ENCODE measurements at regions of chr12 and their contacts with region 1.

Region 1: GRCh38 chr12:57983146-57983857 is 41.9 kb downstream of the ATP23 start:
- DNase-seq: peak in 2 of 4 experiments; percentile 14 to 55
- ATAC-seq: peak; percentile 67; the same call in 2 of the 3 replicates
- H3K4me3 ChIP-seq: no peak overlapping the region
- H3K27ac ChIP-seq: no peak overlapping the region
- H3K4me1 ChIP-seq: no peaks in the 10 kb centered on the region
- H3K27me3 ChIP-seq: no peaks in the 10 kb centered on the region
- CTCF ChIP-seq: peak; percentile 55 to 74 (median 61); a peak in 5 of 6 replicates
- EP300 ChIP-seq: no peak
- POLR2A ChIP-seq: no peak
- RAD21 ChIP-seq: peak; percentile 79 to 87

Region 2: DNA sequence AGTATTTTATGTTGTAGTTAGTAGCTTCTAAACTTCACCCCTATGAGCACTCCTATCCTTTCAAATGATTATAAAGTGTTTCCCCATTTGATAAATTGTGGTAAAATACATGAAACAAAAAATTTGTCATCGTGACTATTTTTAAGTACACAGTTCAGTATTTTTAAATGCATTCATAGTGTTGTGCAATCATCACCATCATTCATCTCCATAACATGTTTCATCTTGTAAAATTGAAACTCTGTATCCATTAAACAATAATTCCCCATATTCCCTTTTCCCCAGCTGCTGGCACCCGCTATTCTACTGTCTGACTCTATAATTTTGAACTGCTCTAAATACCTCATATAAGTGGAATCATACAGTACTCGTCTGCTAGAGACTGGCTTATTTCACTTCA is 10.5 kb after region 1 on chr12:
- CTCF ChIA-PET with region 1: no interaction called
- POLR2A ChIA-PET with region 1: no interaction called
- in situ Hi-C with region 1: no loop called
- intact Hi-C with region 1: no loop called
- DNase-seq: no peak
- ATAC-seq: no peak
- H3K4me3 ChIP-seq: no peak overlapping the region
- H3K27ac ChIP-seq: no peak overlapping the region
- H3K4me1 ChIP-seq: no peaks in the 10 kb centered on the region
- H3K27me3 ChIP-seq: no peaks in the 10 kb centered on the region
- CTCF ChIP-seq: no peak
- EP300 ChIP-seq: no peak
- POLR2A ChIP-seq: no peak
- RAD21 ChIP-seq: no peak

Region 3: GRCh38 chr12:58914457-58914856 is 931.2 kb after region 1 on chr12:
- CTCF ChIA-PET with region 1: no interaction called
- POLR2A ChIA-PET with region 1: no interaction called
- in situ Hi-C with region 1: no loop called
- intact Hi-C with region 1: loop called (anchors 5 kb)
- DNase-seq: no peak
- ATAC-seq: no peak
- H3K4me3 ChIP-seq: no peak overlapping the region
- H3K27ac ChIP-seq: no peak overlapping the region
- H3K4me1 ChIP-seq: no peaks in the 10 kb centered on the region
- H3K27me3 ChIP-seq: no peaks in the 10 kb centered on the region
- CTCF ChIP-seq: no peak
- EP300 ChIP-seq: no peak
- POLR2A ChIP-seq: no peak
- RAD21 ChIP-seq: no peak